Naive thymus-derived CD4-positive, alpha-beta T cell (primary cell): ENCODE measurements at regions of chr2 and their contacts with region 1.

Region 1: GRCh38 chr2:85804583-85804982 is 50.8 kb downstream of the ATOH8 start:
- DNase-seq: peak in 5 of 9 donors; percentile 27 to 44 (median 39)
- ATAC-seq: peak; percentile 61
- H3K4me3 ChIP-seq: no peak overlapping the region
- H3K4me3 Mint-ChIP-seq: peak overlapping the region in 2 of 10 donors; percentile 10 to 30
- H3K27ac ChIP-seq: no peak overlapping the region
- H3K27ac Mint-ChIP-seq: peak overlapping the region in 1 of 9 donors; percentile 12
- H3K4me1 ChIP-seq: peaks cover 9 to 10% of the 10 kb centered on the region in 2 donors
- H3K4me1 Mint-ChIP-seq: peaks cover 5 to 17% (median 14%) of the 10 kb centered on the region in 7 donors
- H3K27me3 ChIP-seq: no peaks in the 10 kb centered on the region
- H3K27me3 Mint-ChIP-seq: peaks cover 0 to 20% (median 5%) of the 10 kb centered on the region in 5 donors

Region 2: GRCh38 chr2:85457877-85458316 is 346.7 kb before region 1 on chr2:
- CTCF ChIA-PET with region 1: no interaction called
- POLR2A ChIA-PET with region 1: no interaction called
- intact Hi-C with region 1: no loop called
- DNase-seq: no peak
- ATAC-seq: no peak
- H3K4me3 ChIP-seq: no peak overlapping the region
- H3K4me3 Mint-ChIP-seq: no peak overlapping the region
- H3K27ac ChIP-seq: no peak overlapping the region
- H3K27ac Mint-ChIP-seq: no peak overlapping the region
- H3K4me1 ChIP-seq: no peaks in the 10 kb centered on the region
- H3K4me1 Mint-ChIP-seq: peaks cover 0 to 2% (median 0%) of the 10 kb centered on the region in 7 donors
- H3K27me3 ChIP-seq: no peaks in the 10 kb centered on the region
- H3K27me3 Mint-ChIP-seq: peaks cover 0 to 14% (median 0%) of the 10 kb centered on the region in 5 donors

Region 3: DNA sequence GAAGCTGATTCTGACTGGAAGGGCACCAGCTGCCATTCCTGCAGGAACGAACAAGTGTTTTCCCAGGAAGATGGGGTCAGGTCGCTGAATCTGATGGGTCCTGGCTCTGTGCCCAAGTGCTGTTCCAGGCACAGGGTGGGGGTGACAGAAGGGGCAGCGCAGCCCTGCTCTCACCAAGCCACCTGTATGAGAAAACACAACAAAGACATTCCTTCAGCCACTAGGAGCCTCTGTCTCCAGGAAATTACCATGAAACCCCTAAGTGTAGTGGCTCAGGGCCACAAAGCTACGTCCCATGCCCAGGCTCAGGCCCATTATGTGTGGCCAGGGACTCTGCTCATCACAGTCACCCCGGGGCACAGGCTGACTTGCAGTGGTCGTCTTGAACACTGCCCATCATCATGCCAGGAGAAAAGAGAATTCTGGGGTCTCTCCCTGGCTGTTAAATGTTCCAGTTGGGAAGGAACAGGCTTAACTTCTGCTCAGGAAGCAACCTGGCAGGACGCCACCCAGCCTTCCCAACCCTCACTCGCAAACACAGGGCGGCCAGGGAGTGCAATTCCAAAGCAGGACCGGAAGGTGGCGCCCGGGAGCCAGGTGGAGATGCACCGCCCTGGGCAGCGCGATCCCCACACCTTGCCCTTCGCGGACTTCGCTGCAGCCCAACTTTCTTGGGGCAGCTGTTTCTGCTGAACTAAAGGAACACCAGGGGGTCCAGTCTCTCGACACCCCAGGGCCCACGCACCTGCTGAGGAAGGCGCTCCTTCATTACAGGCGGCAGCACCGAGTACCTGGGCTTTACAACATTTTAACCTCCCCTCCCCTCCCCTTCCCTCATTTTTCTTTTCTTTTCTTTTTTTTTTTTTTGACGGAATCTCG is 125.5 kb before region 1 on chr2:
- CTCF ChIA-PET with region 1: no interaction called
- POLR2A ChIA-PET with region 1: no interaction called
- intact Hi-C with region 1: loop called in 1 of 2 experiments (anchors 2 kb)
- DNase-seq: peak; percentile 43 to 86 (median 71)
- ATAC-seq: peak; percentile 97
- H3K4me3 ChIP-seq: no peak overlapping the region
- H3K4me3 Mint-ChIP-seq: peak overlapping the region in 7 of 10 donors; percentile 13 to 62 (median 52)
- H3K27ac ChIP-seq: no peak overlapping the region
- H3K27ac Mint-ChIP-seq: peak overlapping the region in 1 of 9 donors; percentile 57
- H3K4me1 ChIP-seq: peaks cover 0 to 7% of the 10 kb centered on the region in 2 donors
- H3K4me1 Mint-ChIP-seq: peaks cover 0 to 30% (median 0%) of the 10 kb centered on the region in 7 donors
- H3K27me3 ChIP-seq: no peaks in the 10 kb centered on the region
- H3K27me3 Mint-ChIP-seq: peaks cover 0 to 7% (median 3%) of the 10 kb centered on the region in 5 donors

Region 4: GRCh38 chr2:85728883-85729824 is 75.4 kb before region 1 on chr2:
- CTCF ChIA-PET with region 1: no interaction called
- POLR2A ChIA-PET with region 1: no interaction called
- intact Hi-C with region 1: loop called in 1 of 2 experiments (anchors 2 kb)
- DNase-seq: peak; percentile 16 to 84 (median 58)
- ATAC-seq: peak; percentile 88
- H3K4me3 ChIP-seq: no peak overlapping the region
- H3K4me3 Mint-ChIP-seq: no peak overlapping the region
- H3K27ac ChIP-seq: no peak overlapping the region
- H3K27ac Mint-ChIP-seq: peak overlapping the region in 1 of 9 donors; percentile 12
- H3K4me1 ChIP-seq: peaks cover 0 to 8% of the 10 kb centered on the region in 2 donors
- H3K4me1 Mint-ChIP-seq: peaks cover 0 to 9% (median 0%) of the 10 kb centered on the region in 7 donors
- H3K27me3 ChIP-seq: no peaks in the 10 kb centered on the region
- H3K27me3 Mint-ChIP-seq: peaks cover 0 to 30% (median 8%) of the 10 kb centered on the region in 5 donors

Region 5: GRCh38 chr2:85750587-85751575 is 53.7 kb before region 1 on chr2:
- CTCF ChIA-PET with region 1: interaction called, 3 read pairs
- POLR2A ChIA-PET with region 1: no interaction called
- intact Hi-C with region 1: loop called (anchors 1 to 2 kb)
- DNase-seq: peak in 7 of 9 donors; percentile 36 to 62 (median 42)
- ATAC-seq: peak; percentile 79
- H3K4me3 ChIP-seq: no peak overlapping the region
- H3K4me3 Mint-ChIP-seq: peak overlapping the region in 1 of 10 donors; percentile 44
- H3K27ac ChIP-seq: no peak overlapping the region
- H3K27ac Mint-ChIP-seq: no peak overlapping the region
- H3K4me1 ChIP-seq: peaks cover 9 to 13% of the 10 kb centered on the region in 2 donors
- H3K4me1 Mint-ChIP-seq: peaks cover 5 to 20% (median 17%) of the 10 kb centered on the region in 7 donors
- H3K27me3 ChIP-seq: peaks cover 6 to 13% of the 10 kb centered on the region in 2 donors
- H3K27me3 Mint-ChIP-seq: peaks cover 47 to 89% (median 49%) of the 10 kb centered on the region in 5 donors